Heart right ventricle (tissue), 16 donors: ENCODE measurements at regions of chr11 and their contacts with region 1.

Region 1: GRCh38 chr11:118145285-118146227 is 7.1 kb downstream of the SCN4B start:
- DNase-seq: peak; percentile 83 to 85
- ATAC-seq: peak; percentile 83 to 94 (median 88)
- H3K4me3 ChIP-seq: peak overlapping the region; percentile 39 to 70 (median 62)
- H3K27ac ChIP-seq: peak overlapping the region in 9 of 10 donors; percentile 35 to 84 (median 71)
- H3K4me1 ChIP-seq: peaks cover 0 to 58% (median 30%) of the 10 kb centered on the region in 9 donors
- H3K27me3 ChIP-seq: peaks cover 0 to 33% (median 4%) of the 10 kb centered on the region in 7 donors
- CTCF ChIP-seq: peak; percentile 79 to 95 (median 94)

Region 2: DNA sequence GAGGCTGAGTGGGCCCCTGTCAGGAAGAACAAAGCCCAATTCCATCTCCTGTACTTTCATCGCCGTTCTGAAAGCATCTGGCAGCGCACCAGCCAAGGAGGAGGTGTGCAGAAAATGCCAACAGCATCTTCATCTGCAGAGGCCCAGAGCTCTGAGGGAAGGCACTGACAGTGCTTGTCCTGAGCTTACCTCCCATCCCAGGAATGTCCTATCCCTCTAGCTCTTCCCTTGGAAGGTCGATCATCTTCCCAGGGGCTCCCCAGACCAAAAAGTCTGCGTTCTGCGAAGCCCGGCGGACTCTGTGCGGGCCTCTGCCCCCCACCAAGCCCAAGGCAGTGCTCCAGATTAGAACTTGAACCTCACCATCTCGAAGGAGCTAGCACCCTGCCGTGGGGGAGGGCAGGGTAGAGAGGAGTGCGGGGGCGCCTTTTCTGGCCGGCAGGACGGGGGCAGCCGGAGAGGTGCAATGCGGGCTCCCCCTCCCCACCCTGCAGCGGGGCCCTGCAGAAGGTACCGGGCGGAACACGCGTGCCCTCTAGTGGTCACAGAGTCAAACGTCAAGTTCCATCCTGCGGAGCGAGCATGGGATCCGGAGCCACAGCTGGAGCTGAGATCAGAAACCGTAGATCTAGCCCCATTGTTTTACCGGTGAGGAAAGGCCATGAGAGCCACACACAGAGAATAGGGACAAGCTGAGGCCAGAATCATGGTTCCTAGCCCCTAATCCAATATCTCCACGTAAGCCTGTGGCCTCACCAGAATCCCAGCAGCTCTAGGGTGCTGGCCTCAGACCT is 25.9 kb after region 1 on chr11:
- intact Hi-C with region 1: loop called in 7 of 10 experiments (anchors 1 to 2 kb)
- DNase-seq: peak; percentile 72 to 78
- ATAC-seq: peak; percentile 45 to 80 (median 72)
- H3K4me3 ChIP-seq: peak overlapping the region in 4 of 10 donors; percentile 15 to 32 (median 24)
- H3K27ac ChIP-seq: peak overlapping the region in 1 of 10 donors; percentile 36
- H3K4me1 ChIP-seq: peaks cover 10 to 48% (median 28%) of the 10 kb centered on the region in 9 donors
- H3K27me3 ChIP-seq: peaks cover 0 to 3% (median 0%) of the 10 kb centered on the region in 7 donors
- CTCF ChIP-seq: peak; percentile 83 to 96 (median 93)

Region 3: GRCh38 chr11:118180300-118180703 is 34.7 kb after region 1 on chr11:
- intact Hi-C with region 1: loop called in 1 of 10 experiments (anchors 5 kb)
- DNase-seq: peak; percentile 83 to 86
- ATAC-seq: peak; percentile 90 to 98 (median 94)
- H3K4me3 ChIP-seq: peak overlapping the region in 2 of 10 donors; percentile 13 to 25
- H3K27ac ChIP-seq: peak overlapping the region; percentile 26 to 86 (median 61)
- H3K4me1 ChIP-seq: peaks cover 0 to 36% (median 13%) of the 10 kb centered on the region in 9 donors
- H3K27me3 ChIP-seq: peaks cover 0 to 8% (median 0%) of the 10 kb centered on the region in 7 donors
- CTCF ChIP-seq: peak in 2 of 9 donors; percentile 32 to 36

Region 4: GRCh38 chr11:118290923-118291322 is 145.4 kb after region 1 on chr11:
- intact Hi-C with region 1: loop called in 8 of 10 experiments (anchors 1 to 5 kb)
- DNase-seq: peak in 1 of 2 donors; percentile 22
- ATAC-seq: peak; percentile 55 to 83 (median 78)
- H3K4me3 ChIP-seq: peak overlapping the region in 1 of 10 donors; percentile 8
- H3K27ac ChIP-seq: no peak overlapping the region
- H3K4me1 ChIP-seq: no peaks in the 10 kb centered on the region
- H3K27me3 ChIP-seq: peaks cover 0 to 6% (median 0%) of the 10 kb centered on the region in 7 donors
- CTCF ChIP-seq: peak in 8 of 9 donors; percentile 11 to 64 (median 55)

Region 5: DNA sequence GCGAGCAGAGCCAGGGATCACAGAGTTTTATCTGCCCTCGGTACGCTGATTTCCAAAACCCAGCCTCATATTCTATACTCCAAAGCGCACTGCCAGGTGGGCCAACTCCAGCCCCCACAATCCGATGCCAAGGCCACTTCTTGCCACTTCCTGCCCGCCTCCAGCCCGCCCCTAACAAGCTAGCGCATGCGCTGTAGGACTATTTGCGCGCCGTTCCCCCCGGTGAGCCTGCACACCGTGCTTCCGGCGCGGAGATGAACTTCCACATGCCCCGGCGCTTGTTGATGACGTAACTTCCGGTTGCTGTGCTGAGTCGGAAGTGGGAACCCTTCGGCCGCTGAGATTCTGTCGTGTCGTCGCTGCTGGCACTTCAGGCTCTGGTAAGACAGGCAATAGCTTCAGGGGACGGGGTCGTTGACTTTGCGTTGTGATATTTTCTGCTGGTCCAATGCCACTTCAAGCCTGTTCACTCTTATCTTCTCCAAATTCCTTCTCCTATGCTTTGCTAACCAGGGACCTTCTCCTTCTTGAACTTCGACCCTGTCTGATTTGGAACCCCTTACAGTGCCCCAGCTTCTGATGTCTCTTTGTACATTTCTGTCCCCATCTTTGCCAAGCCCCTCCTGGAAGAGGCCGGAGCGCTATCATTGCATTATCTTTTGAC is 213.9 kb after region 1 on chr11 and contains the start of gene UBE4A:
- intact Hi-C with region 1: loop called in 2 of 10 experiments (anchors 5 to 10 kb)
- DNase-seq: peak; percentile 95 to 96
- ATAC-seq: peak; percentile 93 to 99 (median 97)
- H3K4me3 ChIP-seq: peak within 1 kb of the TSS; percentile 66 to 96 (median 78)
- H3K27ac ChIP-seq: peak within 1 kb of the TSS in 9 of 10 donors; percentile 14 to 82 (median 61)
- H3K4me1 ChIP-seq: peaks cover 7 to 29% (median 24%) of the 10 kb centered on the region in 9 donors
- H3K27me3 ChIP-seq: no peaks in the 10 kb centered on the region
- CTCF ChIP-seq: no peak
- total RNA-seq, gene UBE4A: 38.4 to 46.4 (median 42.3) TPM